ENCODE measurements at regions of chr6 and their contacts with region 1.

Region 1: GRCh38 chr6:13355043-13355951 is 27.0 kb upstream of the TBC1D7 start:
- DNase-seq: peak; percentile 73
- ATAC-seq: peak; percentile 34
- H3K4me3 ChIP-seq: peak overlapping the region; percentile 30 to 69 (median 37)
- H3K4me3 Mint-ChIP-seq: peak overlapping the region; percentile 80
- H3K27ac ChIP-seq: peak overlapping the region; percentile 91 to 99
- H3K27ac Mint-ChIP-seq: peak overlapping the region; percentile 92
- H3K4me1 ChIP-seq: peaks cover 59 to 74% of the 10 kb centered on the region in 2 donors
- H3K4me1 Mint-ChIP-seq: peaks cover 72% of the 10 kb centered on the region
- H3K27me3 ChIP-seq: no peaks in the 10 kb centered on the region
- H3K27me3 Mint-ChIP-seq: no peaks in the 10 kb centered on the region
- CTCF ChIP-seq: no peak

Region 2: GRCh38 chr6:13296536-13296997 is 58.7 kb before region 1 on chr6:
- CTCF ChIA-PET with region 1: no interaction called
- POLR2A ChIA-PET with region 1: no interaction called
- intact Hi-C with region 1: loop called (anchors 2 kb)
- DNase-seq: peak; percentile 44
- ATAC-seq: peak; percentile 19
- H3K4me3 ChIP-seq: no peak overlapping the region
- H3K4me3 Mint-ChIP-seq: peak overlapping the region; percentile 53
- H3K27ac ChIP-seq: no peak overlapping the region
- H3K27ac Mint-ChIP-seq: peak overlapping the region; percentile 68
- H3K4me1 ChIP-seq: peaks cover 15 to 26% of the 10 kb centered on the region in 2 donors
- H3K4me1 Mint-ChIP-seq: peaks cover 70% of the 10 kb centered on the region
- H3K27me3 ChIP-seq: no peaks in the 10 kb centered on the region
- H3K27me3 Mint-ChIP-seq: no peaks in the 10 kb centered on the region
- CTCF ChIP-seq: peak; percentile 40

Region 3: DNA sequence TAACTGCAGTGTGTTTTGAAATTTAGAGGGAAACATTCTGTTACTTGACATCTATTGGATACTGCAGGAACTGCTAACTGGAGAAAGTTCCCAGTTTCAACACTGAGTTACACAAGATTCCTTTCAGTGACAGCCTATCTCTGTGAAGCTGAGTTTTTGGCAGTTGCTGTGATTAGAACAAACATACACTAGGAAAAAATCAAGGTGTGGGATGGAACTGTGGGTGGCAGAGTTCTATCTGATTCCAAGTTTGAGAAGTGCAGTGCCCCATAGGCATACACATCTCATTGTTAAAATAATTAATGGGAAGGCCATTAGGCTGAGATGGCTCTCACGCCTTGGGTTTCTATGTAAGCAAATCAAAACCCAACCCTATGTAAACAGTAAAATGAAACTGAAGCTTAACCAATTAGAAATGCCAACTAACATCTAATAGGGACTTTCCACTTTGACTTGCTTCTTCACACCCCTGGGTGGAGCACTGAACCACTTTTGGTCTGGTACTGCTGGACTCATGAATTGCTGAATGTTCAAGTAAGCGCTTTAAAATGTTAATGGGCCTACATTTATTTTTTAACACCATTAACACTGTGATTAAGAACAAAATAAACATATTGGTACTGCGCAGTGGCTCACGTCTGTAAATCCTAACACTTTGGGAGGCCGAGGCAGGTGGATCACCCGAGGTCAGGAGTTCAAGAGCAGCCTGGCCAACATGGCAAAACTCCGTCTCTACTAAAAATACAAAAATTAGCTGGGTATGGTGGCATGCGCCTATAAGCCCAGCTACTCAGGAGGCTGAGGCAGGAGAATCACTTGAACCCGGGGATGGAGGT is 28.2 kb after region 1 on chr6:
- CTCF ChIA-PET with region 1: interaction called, 25 read pairs
- POLR2A ChIA-PET with region 1: interaction called, 6 read pairs
- intact Hi-C with region 1: loop called (anchors 1 kb)
- DNase-seq: peak; percentile 83
- ATAC-seq: peak; percentile 96
- H3K4me3 ChIP-seq: no peak overlapping the region
- H3K4me3 Mint-ChIP-seq: peak overlapping the region; percentile 55
- H3K27ac ChIP-seq: peak overlapping the region; percentile 70 to 84
- H3K27ac Mint-ChIP-seq: peak overlapping the region; percentile 92
- H3K4me1 ChIP-seq: peaks cover 36 to 42% of the 10 kb centered on the region in 2 donors
- H3K4me1 Mint-ChIP-seq: peaks cover 73% of the 10 kb centered on the region
- H3K27me3 ChIP-seq: no peaks in the 10 kb centered on the region
- H3K27me3 Mint-ChIP-seq: no peaks in the 10 kb centered on the region
- CTCF ChIP-seq: peak; percentile 53

Region 4: DNA sequence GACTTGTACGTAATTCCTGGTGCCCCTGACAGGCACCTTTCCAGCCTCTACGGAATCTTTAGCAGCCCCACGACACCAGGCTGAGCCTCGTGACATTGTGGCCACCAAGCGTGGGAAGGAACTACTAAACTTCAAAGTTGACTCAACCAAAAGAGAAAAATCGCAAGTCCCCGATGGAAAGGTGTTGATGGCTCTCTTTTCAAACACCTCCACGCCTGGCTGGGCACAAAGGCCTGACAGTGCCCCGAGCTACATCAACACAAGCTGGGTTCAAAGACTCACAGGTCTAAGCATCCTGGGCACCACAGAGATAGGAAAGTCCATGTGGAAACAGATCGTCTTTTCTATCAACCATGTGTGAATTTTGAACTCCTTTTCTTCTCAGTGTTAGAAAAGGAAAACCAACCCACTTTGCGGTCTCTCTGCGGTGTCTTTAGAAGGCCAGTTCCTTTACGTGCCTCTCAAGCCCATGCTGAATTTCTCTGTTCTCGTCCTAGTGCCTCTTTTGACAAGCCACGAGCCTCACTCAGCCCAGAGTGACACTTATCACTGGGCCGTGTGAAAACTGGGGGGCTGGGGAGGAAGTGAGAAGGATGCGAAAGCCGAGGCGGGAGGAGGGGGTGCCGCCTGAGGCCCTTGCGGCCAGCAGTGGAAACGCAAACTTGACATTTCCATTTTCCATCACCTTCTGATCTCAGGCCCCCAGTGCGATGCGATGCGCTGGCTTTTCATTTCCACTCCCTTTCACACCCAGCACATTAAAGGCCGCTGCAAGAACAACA is 72.7 kb after region 1 on chr6:
- CTCF ChIA-PET with region 1: no interaction called
- POLR2A ChIA-PET with region 1: interaction called, 4 read pairs
- intact Hi-C with region 1: loop called (anchors 2 kb)
- DNase-seq: peak; percentile 91
- ATAC-seq: peak; percentile 85
- H3K4me3 ChIP-seq: peak overlapping the region in 4 of 5 experiments; percentile 7 to 46 (median 26)
- H3K4me3 Mint-ChIP-seq: peak overlapping the region; percentile 82
- H3K27ac ChIP-seq: peak overlapping the region; percentile 83 to 86
- H3K27ac Mint-ChIP-seq: peak overlapping the region; percentile 95
- H3K4me1 ChIP-seq: peaks cover 41 to 75% of the 10 kb centered on the region in 2 donors
- H3K4me1 Mint-ChIP-seq: peaks cover 67% of the 10 kb centered on the region
- H3K27me3 ChIP-seq: no peaks in the 10 kb centered on the region
- H3K27me3 Mint-ChIP-seq: no peaks in the 10 kb centered on the region
- CTCF ChIP-seq: peak; percentile 66

Region 5: GRCh38 chr6:13526727-13527670 is 171.7 kb after region 1 on chr6:
- CTCF ChIA-PET with region 1: interaction called, 9 read pairs
- POLR2A ChIA-PET with region 1: no interaction called
- intact Hi-C with region 1: loop called (anchors 1 kb)
- DNase-seq: peak; percentile 86
- ATAC-seq: peak; percentile 88
- H3K4me3 ChIP-seq: peak overlapping the region in 3 of 5 experiments; percentile 0 to 33 (median 11)
- H3K4me3 Mint-ChIP-seq: peak overlapping the region; percentile 40
- H3K27ac ChIP-seq: peak overlapping the region; percentile 76 to 89
- H3K27ac Mint-ChIP-seq: peak overlapping the region; percentile 88
- H3K4me1 ChIP-seq: peaks cover 38 to 41% of the 10 kb centered on the region in 2 donors
- H3K4me1 Mint-ChIP-seq: peaks cover 47% of the 10 kb centered on the region
- H3K27me3 ChIP-seq: no peaks in the 10 kb centered on the region
- H3K27me3 Mint-ChIP-seq: no peaks in the 10 kb centered on the region
- CTCF ChIP-seq: peak; percentile 33

Region 6: DNA sequence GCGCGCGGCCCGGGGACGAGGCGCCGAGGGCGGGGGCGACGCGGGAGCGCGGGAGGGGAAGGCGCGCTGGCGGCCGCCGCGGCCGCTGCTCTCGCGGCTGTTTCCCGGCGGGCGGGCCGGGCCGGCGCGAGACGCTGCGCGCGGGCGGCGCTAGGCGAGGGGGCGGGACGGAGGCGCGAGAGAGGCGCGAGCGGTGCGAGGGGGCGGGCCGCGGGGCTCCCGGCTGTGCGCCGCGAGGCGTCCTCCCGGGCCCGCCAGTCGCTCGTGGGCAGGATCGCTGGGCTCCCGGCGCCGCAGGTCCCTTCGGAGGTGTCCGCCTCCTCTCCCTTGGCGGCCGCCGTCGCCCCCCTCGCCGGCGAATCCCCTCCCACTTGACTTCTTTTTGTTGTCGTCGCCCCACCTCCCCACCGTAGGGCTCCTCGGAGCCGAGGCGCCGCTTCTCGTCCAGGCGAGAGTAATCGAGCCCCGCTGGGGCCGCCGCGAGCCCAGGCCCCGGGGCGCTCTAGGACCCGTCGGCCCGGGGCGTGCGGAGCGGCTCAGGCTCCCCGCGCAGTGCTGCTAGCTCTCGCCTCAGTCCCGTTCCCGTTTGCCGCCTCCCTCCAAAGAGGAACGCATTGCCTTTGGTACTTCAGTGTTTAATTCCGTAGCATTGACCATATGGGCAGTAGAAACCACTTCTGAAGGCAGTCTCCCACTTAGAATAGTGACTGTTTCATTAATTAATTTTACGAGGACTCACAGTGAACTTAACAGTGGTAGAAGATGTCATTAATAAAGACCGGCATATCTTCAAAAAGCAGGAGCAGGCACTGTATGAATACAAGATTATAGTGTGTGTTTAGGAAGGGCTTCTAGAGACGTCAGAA is 356.7 kb after region 1 on chr6 and contains the start of gene RANBP9:
- CTCF ChIA-PET with region 1: no interaction called
- POLR2A ChIA-PET with region 1: no interaction called
- intact Hi-C with region 1: loop called (anchors 1 kb)
- DNase-seq: peak; percentile 94
- ATAC-seq: peak; percentile 82
- H3K4me3 ChIP-seq: peak within 1 kb of the TSS; percentile 58 to 88 (median 78)
- H3K4me3 Mint-ChIP-seq: peak within 1 kb of the TSS; percentile 96
- H3K27ac ChIP-seq: peak within 1 kb of the TSS; percentile 80 to 84
- H3K27ac Mint-ChIP-seq: peak within 1 kb of the TSS; percentile 96
- H3K4me1 ChIP-seq: peaks cover 29 to 33% of the 10 kb centered on the region in 2 donors
- H3K4me1 Mint-ChIP-seq: peaks cover 41% of the 10 kb centered on the region
- H3K27me3 ChIP-seq: no peaks in the 10 kb centered on the region
- H3K27me3 Mint-ChIP-seq: no peaks in the 10 kb centered on the region
- CTCF ChIP-seq: no peak
- total RNA-seq, gene RANBP9: 34.1 and 39.0 TPM in 2 replicates

Measured in B cell (primary cell).